H1 (cell line): ENCODE measurements at regions of chr1 and their contacts with region 1.

Region 1: DNA sequence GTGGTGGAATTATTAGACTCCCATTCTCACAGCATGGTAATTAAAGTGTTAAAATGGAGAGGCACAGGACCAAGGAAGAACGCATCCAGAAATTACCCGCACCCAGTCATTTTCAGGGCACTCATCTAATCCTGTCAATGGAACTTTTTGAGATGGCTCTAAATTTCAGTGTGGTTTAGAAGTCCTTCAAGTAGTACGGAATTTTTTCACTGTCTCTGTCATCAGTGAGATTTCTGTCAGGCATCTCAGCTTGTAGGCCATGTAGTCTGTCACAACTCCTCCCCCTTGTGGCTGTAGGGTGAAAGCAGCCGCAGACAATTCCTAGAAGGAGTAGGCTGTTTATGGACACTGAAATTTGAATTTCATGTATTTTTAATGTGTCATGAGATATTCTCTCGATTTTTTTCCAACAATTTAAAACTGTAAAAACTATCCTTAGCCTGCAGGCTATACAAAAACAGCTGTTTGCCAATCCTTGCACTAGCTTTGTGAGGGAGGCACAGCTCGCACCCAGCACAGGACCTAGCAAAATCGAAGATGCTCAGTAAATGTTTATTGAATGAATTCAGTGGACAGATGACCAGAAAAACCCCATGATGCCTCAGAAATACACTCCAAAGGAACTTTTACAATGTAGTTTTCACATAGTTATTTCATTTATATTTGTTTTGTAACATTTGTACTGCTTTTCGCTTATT is 6.6 kb upstream of the NUP133 start:
- DNase-seq: peak in 1 of 2 experiments; percentile 57
- H3K4me3 ChIP-seq: no peak overlapping the region
- H3K27ac ChIP-seq: no peak overlapping the region
- H3K4me1 ChIP-seq: no peaks in the 10 kb centered on the region
- H3K27me3 ChIP-seq: no peaks in the 10 kb centered on the region
- CTCF ChIP-seq: peak; percentile 57 to 82 (median 70)
- EP300 ChIP-seq: no peak
- POLR2A ChIP-seq: no peak
- RAD21 ChIP-seq: peak; percentile 58 to 66

Region 2: DNA sequence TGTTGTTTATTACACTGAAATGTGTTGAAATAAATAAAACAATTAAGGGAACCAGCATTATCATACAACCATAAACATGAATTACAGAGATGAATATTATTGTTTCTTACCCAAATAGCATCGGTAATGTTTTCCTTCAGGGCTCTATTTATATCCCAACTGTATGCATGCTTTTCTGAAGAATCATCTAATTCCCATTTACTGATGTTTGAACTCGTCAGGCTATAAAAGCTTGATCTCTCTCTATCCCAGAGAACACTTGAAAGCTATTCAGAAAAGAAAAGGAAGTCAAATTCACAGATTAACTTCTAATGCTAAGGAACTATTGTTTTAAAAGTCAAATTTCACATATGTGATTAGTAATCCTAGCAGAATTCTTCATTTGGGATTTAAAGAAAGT is 18.9 kb before region 1 on chr1:
- CTCF ChIA-PET with region 1: interaction called, 10 read pairs
- POLR2A ChIA-PET with region 1: no interaction called
- DNase-seq: no peak
- H3K4me3 ChIP-seq: no peak overlapping the region
- H3K27ac ChIP-seq: no peak overlapping the region
- H3K4me1 ChIP-seq: no peaks in the 10 kb centered on the region
- H3K27me3 ChIP-seq: no peaks in the 10 kb centered on the region
- CTCF ChIP-seq: no peak
- EP300 ChIP-seq: no peak
- POLR2A ChIP-seq: no peak
- RAD21 ChIP-seq: no peak

Region 3: DNA sequence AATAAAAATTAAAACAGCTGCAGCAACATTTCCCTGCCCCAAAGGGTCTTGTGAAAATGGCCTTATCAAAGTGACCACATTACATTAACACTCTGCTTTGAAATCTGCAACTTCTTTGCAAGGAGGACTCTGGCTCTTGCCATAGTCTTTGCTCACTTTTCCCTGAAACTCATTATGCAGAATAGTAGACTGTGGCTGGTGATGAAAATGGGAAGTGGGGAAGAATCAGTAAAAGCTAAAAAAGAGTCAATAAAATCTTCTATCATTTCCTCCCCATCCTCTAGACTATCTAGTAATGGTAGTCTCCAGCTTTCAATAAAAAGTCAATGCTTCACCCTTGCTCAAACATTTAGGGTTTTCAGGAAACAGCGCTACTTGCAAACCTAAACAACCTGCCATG is 12.0 kb after region 1 on chr1:
- CTCF ChIA-PET with region 1: interaction called, 12 read pairs
- POLR2A ChIA-PET with region 1: interaction called, 3 read pairs
- DNase-seq: no peak
- H3K4me3 ChIP-seq: no peak overlapping the region
- H3K27ac ChIP-seq: no peak overlapping the region
- H3K4me1 ChIP-seq: no peaks in the 10 kb centered on the region
- H3K27me3 ChIP-seq: no peaks in the 10 kb centered on the region
- CTCF ChIP-seq: no peak
- EP300 ChIP-seq: no peak
- POLR2A ChIP-seq: no peak
- RAD21 ChIP-seq: no peak